Panc1 (cell line): ENCODE measurements at regions of chr13 and their contacts with region 1.

Region 1: DNA sequence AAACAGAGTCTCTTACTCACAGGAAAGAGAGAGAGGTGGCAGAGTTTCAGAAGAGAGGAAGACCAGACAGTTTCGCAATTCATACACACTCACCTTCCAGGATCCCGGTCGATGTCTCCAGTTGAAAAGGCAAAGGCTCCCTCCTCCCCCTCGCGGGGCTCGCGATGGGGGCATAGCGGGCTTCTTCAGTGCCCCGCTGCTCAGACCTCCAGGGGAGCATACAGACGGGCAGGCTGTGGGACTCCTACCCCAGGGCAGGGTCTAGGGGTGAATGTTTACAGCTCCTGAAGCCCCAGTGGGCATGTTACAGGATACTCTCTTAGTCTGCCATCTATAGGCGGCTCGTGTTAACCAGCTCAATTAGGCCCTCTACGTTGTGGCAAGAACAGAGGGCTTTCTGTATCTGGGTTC is 139.2 kb downstream of the SLITRK5 start:
- DNase-seq: no peak
- ATAC-seq: peak; percentile 94
- H3K4me3 ChIP-seq: peak overlapping the region; percentile 58 to 86
- H3K27ac ChIP-seq: peak overlapping the region; percentile 86
- H3K4me1 ChIP-seq: peaks cover 9% of the 10 kb centered on the region; the same call in 1 of the 2 replicates
- H3K27me3 ChIP-seq: no peaks in the 10 kb centered on the region
- CTCF ChIP-seq: peak; percentile 82

Region 2: DNA sequence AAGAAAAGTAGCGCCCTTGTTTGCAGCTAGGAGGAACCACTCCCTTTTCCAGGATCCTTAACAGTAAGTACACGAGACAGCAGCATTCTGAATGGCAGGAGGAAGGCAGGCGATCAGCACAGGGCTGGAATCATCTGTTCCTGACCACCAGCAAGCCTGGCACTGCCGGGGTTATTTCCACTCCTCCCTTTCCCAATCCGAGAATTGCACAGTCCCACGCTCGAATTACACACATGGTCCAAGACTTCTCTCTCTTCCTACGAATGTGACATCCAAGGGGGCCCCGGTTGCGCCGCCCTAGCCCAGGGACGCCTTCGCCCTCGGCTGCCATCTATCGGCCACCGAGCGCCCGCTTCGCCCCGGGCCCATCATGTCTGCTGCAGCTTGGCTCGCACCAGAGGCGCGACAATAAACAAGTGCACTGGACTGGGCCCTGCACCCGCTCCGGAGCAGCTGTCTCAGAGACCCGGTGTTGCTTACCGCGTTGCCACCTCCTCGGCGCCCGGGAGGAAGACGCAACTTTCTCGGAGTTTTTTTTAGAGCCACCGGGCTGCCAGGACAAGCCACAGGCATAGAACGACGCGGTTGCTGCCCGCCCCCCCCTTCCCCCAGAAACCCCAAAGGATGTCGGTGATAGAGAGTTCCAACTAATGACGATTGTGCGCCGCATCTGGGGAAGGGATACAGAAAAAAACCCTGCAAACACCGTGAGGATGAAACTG is 139.2 kb before region 1 on chr13 and contains the start of gene SLITRK5:
- CTCF ChIA-PET with region 1: no interaction called
- POLR2A ChIA-PET with region 1: no interaction called
- in situ Hi-C with region 1: no loop called
- intact Hi-C with region 1: loop called (anchors 10 kb)
- DNase-seq: no peak
- ATAC-seq: peak; percentile 98
- H3K4me3 ChIP-seq: peak within 1 kb of the TSS; percentile 50 to 65
- H3K27ac ChIP-seq: peak within 1 kb of the TSS; percentile 70
- H3K4me1 ChIP-seq: no peaks in the 10 kb centered on the region
- H3K27me3 ChIP-seq: no peaks in the 10 kb centered on the region
- CTCF ChIP-seq: peak; percentile 91
- total RNA-seq, gene SLITRK5: 0.08 TPM

Region 3: GRCh38 chr13:87736849-87737385 is 73.5 kb before region 1 on chr13:
- CTCF ChIA-PET with region 1: no interaction called
- POLR2A ChIA-PET with region 1: interaction called, 11 read pairs
- in situ Hi-C with region 1: no loop called
- intact Hi-C with region 1: no loop called
- DNase-seq: no peak
- ATAC-seq: no peak
- H3K4me3 ChIP-seq: no peak overlapping the region
- H3K27ac ChIP-seq: no peak overlapping the region
- H3K4me1 ChIP-seq: no peaks in the 10 kb centered on the region
- H3K27me3 ChIP-seq: no peaks in the 10 kb centered on the region
- CTCF ChIP-seq: no peak

Region 4: GRCh38 chr13:87821512-87821911 is 11.1 kb after region 1 on chr13:
- CTCF ChIA-PET with region 1: no interaction called
- POLR2A ChIA-PET with region 1: no interaction called
- in situ Hi-C with region 1: no loop called
- intact Hi-C with region 1: no loop called
- DNase-seq: no peak
- ATAC-seq: no peak
- H3K4me3 ChIP-seq: peak overlapping the region; percentile 14 to 33; a peak in 3 of 4 replicates
- H3K27ac ChIP-seq: peak overlapping the region; percentile 7; the same call in 1 of the 2 replicates
- H3K4me1 ChIP-seq: no peaks in the 10 kb centered on the region
- H3K27me3 ChIP-seq: no peaks in the 10 kb centered on the region
- CTCF ChIP-seq: no peak

Region 5: GRCh38 chr13:88196106-88196505 is 385.7 kb after region 1 on chr13:
- CTCF ChIA-PET with region 1: no interaction called
- POLR2A ChIA-PET with region 1: no interaction called
- in situ Hi-C with region 1: no loop called
- intact Hi-C with region 1: no loop called
- DNase-seq: no peak
- ATAC-seq: no peak
- H3K4me3 ChIP-seq: no peak overlapping the region
- H3K27ac ChIP-seq: no peak overlapping the region
- H3K4me1 ChIP-seq: no peaks in the 10 kb centered on the region
- H3K27me3 ChIP-seq: no peaks in the 10 kb centered on the region
- CTCF ChIP-seq: no peak